Activated CD4-positive, alpha-beta memory T cell treated with anti-CD3 and anti-CD28 coated beads, Interleukin-2, amount 10 ng/mL, durations not matched to agents 7 days and 5 days (primary cell): ENCODE measurements at regions of chr13 and their contacts with region 1.

Region 1: DNA sequence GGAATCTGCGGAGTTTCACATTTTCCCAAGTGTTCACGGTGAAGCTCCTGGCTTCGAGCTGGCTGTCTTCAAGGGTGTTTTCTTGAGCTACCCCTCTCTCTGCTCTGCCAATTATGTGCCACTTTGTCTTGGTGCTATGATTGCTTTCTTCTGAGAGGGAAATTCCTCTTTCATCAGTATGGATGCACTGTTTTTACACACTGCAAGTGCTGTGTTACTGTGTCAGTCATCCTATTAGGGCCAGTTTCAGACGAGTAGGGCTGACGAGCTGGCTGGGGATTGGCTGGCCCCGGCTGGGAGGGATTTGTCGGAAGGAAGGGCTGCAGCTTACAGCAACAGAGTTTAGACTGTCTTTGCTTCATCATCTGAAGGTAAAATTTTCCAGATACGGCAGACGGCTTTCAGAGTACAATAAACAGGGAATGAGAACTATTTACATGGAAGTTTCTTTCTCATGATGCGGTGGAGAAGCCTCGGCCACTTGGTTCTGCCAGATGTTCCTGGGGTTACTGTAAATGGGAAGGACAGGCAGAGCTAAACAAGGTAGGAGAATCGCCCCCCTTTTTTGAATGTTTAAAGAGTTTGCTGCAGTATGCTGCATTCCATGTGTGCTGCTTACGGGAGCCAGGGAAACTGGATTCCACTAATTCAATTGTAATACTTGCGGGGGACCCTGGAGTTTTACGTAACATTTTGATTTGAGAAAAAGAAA is at the start of gene MBNL2:
- DNase-seq: peak; percentile 89
- H3K4me3 Mint-ChIP-seq: peak within 1 kb of the TSS; percentile 78
- H3K27ac Mint-ChIP-seq: peak within 1 kb of the TSS; percentile 76
- H3K4me1 Mint-ChIP-seq: peaks cover 42% of the 10 kb centered on the region
- H3K27me3 Mint-ChIP-seq: no peaks in the 10 kb centered on the region
- total RNA-seq, gene MBNL2: 18.0 to 18.8 TPM

Region 2: DNA sequence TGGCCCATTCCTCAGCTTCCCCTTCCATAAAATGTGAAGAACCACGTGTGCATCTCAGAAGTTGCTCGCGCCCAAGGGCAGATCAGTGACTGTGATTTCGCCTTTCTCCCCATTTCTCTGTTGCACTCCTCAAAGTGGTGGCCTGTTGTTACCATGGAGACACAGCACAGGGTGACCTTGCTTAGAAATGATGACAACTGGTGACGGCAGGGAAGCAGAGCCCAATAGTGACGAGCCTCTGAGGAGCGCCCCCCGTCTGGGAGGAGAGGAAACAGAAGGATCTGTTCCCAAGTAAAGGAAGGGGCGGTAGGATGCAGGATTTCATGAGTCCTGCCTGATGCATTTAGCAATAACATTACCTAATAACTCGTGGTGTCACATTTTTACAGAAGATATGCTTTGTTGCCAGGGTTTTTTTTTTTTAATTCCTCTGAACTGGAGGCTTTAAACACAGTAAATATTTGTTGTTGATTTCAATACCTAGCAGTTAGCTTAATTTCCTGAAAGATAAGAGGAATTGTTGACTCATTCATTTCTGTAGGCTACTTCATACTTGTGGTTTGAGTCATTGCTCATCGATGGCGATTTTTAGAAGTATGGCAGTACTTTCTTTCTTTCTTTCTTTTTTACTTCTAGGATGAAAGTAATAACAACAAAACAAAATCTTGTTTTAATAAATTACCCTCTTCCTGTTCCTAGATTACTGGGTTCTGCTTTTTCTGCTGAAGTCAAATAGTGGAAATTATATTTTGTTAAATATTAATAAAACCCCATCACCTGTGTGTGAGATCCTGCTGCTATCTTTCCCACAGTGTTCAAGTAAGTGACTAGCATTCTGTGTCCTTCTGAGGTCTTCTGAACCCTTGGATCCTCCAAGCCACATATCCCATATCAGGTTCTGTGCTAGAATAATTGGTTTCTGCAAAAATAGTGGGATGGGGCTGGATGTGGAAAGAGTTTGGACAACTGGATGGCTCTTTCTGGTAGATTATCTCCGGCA is 36.0 kb after region 1 on chr13:
- CTCF ChIA-PET with region 1: interaction called, 5 read pairs
- POLR2A ChIA-PET with region 1: interaction called, 12 read pairs
- DNase-seq: peak; percentile 38
- H3K4me3 Mint-ChIP-seq: peak overlapping the region; percentile 40
- H3K27ac Mint-ChIP-seq: peak overlapping the region; percentile 78
- H3K4me1 Mint-ChIP-seq: peaks cover 78% of the 10 kb centered on the region
- H3K27me3 Mint-ChIP-seq: no peaks in the 10 kb centered on the region